ENCODE measurements at regions of chr6 and their contacts with region 1.

Region 1: GRCh38 chr6:42104095-42104806 is 38.2 kb downstream of the C6orf132 start:
- DNase-seq: peak; percentile 86
- ATAC-seq: peak; percentile 87
- H3K4me3 Mint-ChIP-seq: peak overlapping the region; percentile 54
- H3K27ac Mint-ChIP-seq: peak overlapping the region; percentile 75
- H3K4me1 Mint-ChIP-seq: peaks cover 42% of the 10 kb centered on the region
- H3K27me3 Mint-ChIP-seq: no peaks in the 10 kb centered on the region

Region 2: GRCh38 chr6:41787219-41787917 is 316.9 kb before region 1 on chr6 and contains the start of gene TOMM6:
- CTCF ChIA-PET with region 1: interaction called, 17 read pairs
- DNase-seq: peak; percentile 97
- ATAC-seq: peak; percentile 87
- H3K4me3 Mint-ChIP-seq: peak within 1 kb of the TSS; percentile 97
- H3K27ac Mint-ChIP-seq: peak within 1 kb of the TSS; percentile 97
- H3K4me1 Mint-ChIP-seq: peaks cover 22% of the 10 kb centered on the region
- H3K27me3 Mint-ChIP-seq: peaks cover 9% of the 10 kb centered on the region
- total RNA-seq, gene TOMM6: 161 to 219 TPM

Region 3: GRCh38 chr6:42050266-42051032 is 53.8 kb before region 1 on chr6 and contains the start of gene TAF8:
- CTCF ChIA-PET with region 1: interaction called, 32 read pairs
- DNase-seq: peak; percentile 96
- ATAC-seq: peak; percentile 82
- H3K4me3 Mint-ChIP-seq: peak within 1 kb of the TSS; percentile 94
- H3K27ac Mint-ChIP-seq: peak within 1 kb of the TSS; percentile 98
- H3K4me1 Mint-ChIP-seq: peaks cover 68% of the 10 kb centered on the region
- H3K27me3 Mint-ChIP-seq: no peaks in the 10 kb centered on the region
- total RNA-seq, gene TAF8: 50.9 to 53.2 TPM

Region 4: GRCh38 chr6:42086046-42087035 is 17.9 kb before region 1 on chr6:
- CTCF ChIA-PET with region 1: interaction called, 65 read pairs
- DNase-seq: no peak
- ATAC-seq: no peak
- H3K4me3 Mint-ChIP-seq: no peak overlapping the region
- H3K27ac Mint-ChIP-seq: no peak overlapping the region
- H3K4me1 Mint-ChIP-seq: no peaks in the 10 kb centered on the region
- H3K27me3 Mint-ChIP-seq: no peaks in the 10 kb centered on the region

Region 5: GRCh38 chr6:42136508-42137193 is 32.4 kb after region 1 on chr6:
- CTCF ChIA-PET with region 1: interaction called, 11 read pairs
- DNase-seq: peak; percentile 49
- ATAC-seq: peak; percentile 61
- H3K4me3 Mint-ChIP-seq: no peak overlapping the region
- H3K27ac Mint-ChIP-seq: no peak overlapping the region
- H3K4me1 Mint-ChIP-seq: peaks cover 4% of the 10 kb centered on the region
- H3K27me3 Mint-ChIP-seq: peaks cover 12% of the 10 kb centered on the region

Region 6: GRCh38 chr6:42177514-42178364 is 73.5 kb after region 1 on chr6:
- CTCF ChIA-PET with region 1: interaction called, 20 read pairs
- DNase-seq: no peak
- ATAC-seq: no peak
- H3K4me3 Mint-ChIP-seq: no peak overlapping the region
- H3K27ac Mint-ChIP-seq: no peak overlapping the region
- H3K4me1 Mint-ChIP-seq: no peaks in the 10 kb centered on the region
- H3K27me3 Mint-ChIP-seq: peaks cover 3% of the 10 kb centered on the region

Measured in activated CD8-positive, alpha-beta memory T cell treated with anti-CD3 and anti-CD28 coated beads, Interleukin-2, amount 10 ng/mL, durations not matched to agents 7 days and 5 days (primary cell).